Activated naive CD4-positive, alpha-beta T cell treated with anti-CD3 and anti-CD28 coated beads for 36 hours (primary cell): ENCODE measurements at regions of chr1 and their contacts with region 1.

Region 1: DNA sequence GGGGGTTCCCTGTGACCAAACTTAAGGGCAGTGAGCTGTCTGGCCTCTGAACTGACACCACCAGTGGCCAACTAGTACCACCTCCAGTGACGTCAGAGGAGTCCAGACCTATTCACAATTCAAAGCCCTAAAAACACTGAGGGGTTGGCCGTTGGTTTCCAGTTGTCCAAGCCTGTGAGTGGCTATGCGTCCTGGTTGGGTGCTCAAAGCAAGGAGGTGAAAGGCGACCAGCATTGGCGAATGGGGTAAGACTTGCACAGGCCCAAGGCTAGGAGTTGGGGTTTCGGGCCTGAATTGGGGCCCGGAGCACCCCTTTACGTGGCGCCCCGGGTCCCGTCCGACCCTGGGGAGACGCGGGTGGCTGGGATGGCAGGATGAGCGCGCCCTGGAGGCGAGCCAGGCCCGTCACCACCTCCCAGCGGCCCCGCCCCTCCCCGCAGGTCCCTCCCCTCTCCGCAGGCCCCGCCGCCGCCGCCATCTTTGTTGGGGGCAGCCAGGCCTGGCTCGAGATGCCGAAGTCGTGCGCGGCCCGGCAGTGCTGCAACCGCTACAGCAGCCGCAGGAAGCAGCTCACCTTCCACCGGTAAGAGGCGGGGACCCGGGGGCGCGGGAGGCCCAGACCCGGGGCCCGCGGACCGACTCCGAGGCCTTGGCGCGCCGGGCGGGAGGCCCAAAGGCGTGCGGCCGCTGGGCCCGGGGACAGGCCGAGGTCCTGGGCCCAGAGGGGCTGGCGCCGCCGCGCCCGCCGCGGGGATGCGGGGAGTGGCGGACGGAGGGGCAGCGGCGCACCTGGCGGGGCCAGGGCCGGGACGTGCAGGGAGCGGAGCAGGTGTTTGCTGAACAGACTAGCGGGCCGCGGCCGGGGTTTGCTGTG is at the start of gene THAP3:
- DNase-seq: peak; percentile 91
- H3K4me3 Mint-ChIP-seq: peak within 1 kb of the TSS; percentile 87
- H3K27ac Mint-ChIP-seq: peak within 1 kb of the TSS; percentile 66
- H3K4me1 Mint-ChIP-seq: peaks cover 29% of the 10 kb centered on the region
- H3K27me3 Mint-ChIP-seq: no peaks in the 10 kb centered on the region
- total RNA-seq, gene THAP3: 27.3 to 30.9 TPM

Region 2: DNA sequence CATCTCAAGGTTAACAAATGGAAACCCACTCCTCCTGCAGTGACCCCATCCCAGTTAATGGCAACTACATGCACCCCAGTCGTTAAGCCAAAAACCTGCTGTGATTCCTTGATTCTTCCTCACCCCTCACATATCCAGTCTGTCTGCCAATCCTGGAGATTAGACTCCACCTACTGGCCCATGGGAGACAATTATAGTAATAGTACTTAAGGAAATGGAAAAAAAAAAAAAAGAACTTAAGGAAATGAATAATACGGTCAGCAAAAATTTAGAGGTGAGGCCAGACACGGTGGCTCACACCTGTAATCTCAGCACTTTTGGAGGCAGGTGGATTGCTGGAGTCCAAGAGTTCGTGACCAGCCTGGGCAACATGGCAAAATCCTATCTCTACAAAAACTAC is 77.6 kb before region 1 on chr1:
- CTCF ChIA-PET with region 1: no interaction called
- intact Hi-C with region 1: loop called (anchors 5 kb)
- DNase-seq: no peak
- H3K4me3 Mint-ChIP-seq: no peak overlapping the region
- H3K27ac Mint-ChIP-seq: peak overlapping the region; percentile 77
- H3K4me1 Mint-ChIP-seq: peaks cover 34% of the 10 kb centered on the region
- H3K27me3 Mint-ChIP-seq: no peaks in the 10 kb centered on the region

Region 3: DNA sequence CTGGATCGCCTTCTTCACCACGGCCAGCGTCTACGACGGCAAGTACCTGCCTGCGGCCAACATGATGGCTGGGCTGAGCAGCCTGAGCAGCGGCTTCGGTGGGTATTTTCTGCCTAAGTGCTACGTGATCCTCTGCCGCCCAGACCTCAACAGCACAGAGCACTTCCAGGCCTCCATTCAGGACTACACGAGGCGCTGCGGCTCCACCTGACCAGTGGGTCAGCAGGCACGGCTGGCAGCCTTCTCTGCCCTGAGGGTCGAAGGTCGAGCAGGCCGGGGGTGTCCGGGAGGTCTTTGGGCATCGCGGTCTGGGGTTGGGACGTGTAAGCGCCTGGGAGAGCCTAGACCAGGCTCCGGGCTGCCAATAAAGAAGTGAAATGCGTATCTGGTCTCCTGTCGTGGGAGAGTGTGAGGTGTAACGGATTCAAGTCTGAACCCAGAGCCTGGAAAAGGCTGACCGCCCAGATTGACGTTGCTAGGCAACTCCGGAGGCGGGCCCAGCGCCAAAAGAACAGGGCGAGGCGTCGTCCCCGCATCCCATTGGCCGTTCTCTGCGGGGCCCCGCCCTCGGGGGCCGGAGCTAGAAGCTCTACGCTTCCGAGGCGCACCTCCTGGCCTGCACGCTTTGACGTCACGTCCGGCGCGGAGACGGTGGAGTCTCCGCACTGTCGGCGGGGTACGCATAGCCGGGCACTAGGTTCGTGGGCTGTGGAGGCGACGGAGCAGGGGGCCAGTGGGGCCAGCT is 45.4 kb before region 1 on chr1 and contains the start of gene ZBTB48:
- CTCF ChIA-PET with region 1: interaction called, 8 read pairs
- intact Hi-C with region 1: loop called (anchors 2 kb)
- DNase-seq: peak; percentile 98
- H3K4me3 Mint-ChIP-seq: peak within 1 kb of the TSS; percentile 97
- H3K27ac Mint-ChIP-seq: peak within 1 kb of the TSS; percentile 94
- H3K4me1 Mint-ChIP-seq: peaks cover 34% of the 10 kb centered on the region
- H3K27me3 Mint-ChIP-seq: no peaks in the 10 kb centered on the region
- total RNA-seq, gene ZBTB48: 15.0 to 18.3 TPM

Region 4: GRCh38 chr1:6613361-6614018 is 11.5 kb before region 1 on chr1 and contains the start of gene PHF13:
- CTCF ChIA-PET with region 1: no interaction called
- intact Hi-C with region 1: loop called (anchors 1 kb)
- DNase-seq: peak; percentile 100
- H3K4me3 Mint-ChIP-seq: peak within 1 kb of the TSS; percentile 87
- H3K27ac Mint-ChIP-seq: peak within 1 kb of the TSS; percentile 81
- H3K4me1 Mint-ChIP-seq: peaks cover 17% of the 10 kb centered on the region
- H3K27me3 Mint-ChIP-seq: no peaks in the 10 kb centered on the region
- total RNA-seq, gene PHF13: 10.8 to 11.3 TPM